CD4-positive, alpha-beta memory T cell (primary cell): ENCODE measurements at regions of chr4 and their contacts with region 1.

Region 1: GRCh38 chr4:122577808-122578781 is 42.8 kb downstream of the IL21 start:
- DNase-seq: peak; percentile 84 to 93 (median 87)
- H3K4me3 ChIP-seq: peak overlapping the region in 1 of 2 donors; percentile 12
- H3K4me3 Mint-ChIP-seq: peak overlapping the region; percentile 69 to 85 (median 78)
- H3K27ac ChIP-seq: peak overlapping the region; percentile 60
- H3K27ac Mint-ChIP-seq: peak overlapping the region; percentile 84 to 98 (median 96)
- H3K4me1 ChIP-seq: peaks cover 32% of the 10 kb centered on the region
- H3K4me1 Mint-ChIP-seq: peaks cover 29 to 49% (median 34%) of the 10 kb centered on the region in 4 donors
- H3K27me3 ChIP-seq: no peaks in the 10 kb centered on the region
- H3K27me3 Mint-ChIP-seq: no peaks in the 10 kb centered on the region

Region 2: GRCh38 chr4:121900132-121900983 is 677.7 kb before region 1 on chr4:
- CTCF ChIA-PET with region 1: interaction called, 24 read pairs
- POLR2A ChIA-PET with region 1: no interaction called
- intact Hi-C with region 1: loop called (anchors 1 kb)
- DNase-seq: peak; percentile 44 to 57 (median 49)
- H3K4me3 ChIP-seq: no peak overlapping the region
- H3K4me3 Mint-ChIP-seq: no peak overlapping the region
- H3K27ac ChIP-seq: no peak overlapping the region
- H3K27ac Mint-ChIP-seq: no peak overlapping the region
- H3K4me1 ChIP-seq: no peaks in the 10 kb centered on the region
- H3K4me1 Mint-ChIP-seq: peaks cover 0 to 8% (median 4%) of the 10 kb centered on the region in 4 donors
- H3K27me3 ChIP-seq: no peaks in the 10 kb centered on the region
- H3K27me3 Mint-ChIP-seq: peaks cover 2 to 7% of the 10 kb centered on the region in 2 donors

Region 3: DNA sequence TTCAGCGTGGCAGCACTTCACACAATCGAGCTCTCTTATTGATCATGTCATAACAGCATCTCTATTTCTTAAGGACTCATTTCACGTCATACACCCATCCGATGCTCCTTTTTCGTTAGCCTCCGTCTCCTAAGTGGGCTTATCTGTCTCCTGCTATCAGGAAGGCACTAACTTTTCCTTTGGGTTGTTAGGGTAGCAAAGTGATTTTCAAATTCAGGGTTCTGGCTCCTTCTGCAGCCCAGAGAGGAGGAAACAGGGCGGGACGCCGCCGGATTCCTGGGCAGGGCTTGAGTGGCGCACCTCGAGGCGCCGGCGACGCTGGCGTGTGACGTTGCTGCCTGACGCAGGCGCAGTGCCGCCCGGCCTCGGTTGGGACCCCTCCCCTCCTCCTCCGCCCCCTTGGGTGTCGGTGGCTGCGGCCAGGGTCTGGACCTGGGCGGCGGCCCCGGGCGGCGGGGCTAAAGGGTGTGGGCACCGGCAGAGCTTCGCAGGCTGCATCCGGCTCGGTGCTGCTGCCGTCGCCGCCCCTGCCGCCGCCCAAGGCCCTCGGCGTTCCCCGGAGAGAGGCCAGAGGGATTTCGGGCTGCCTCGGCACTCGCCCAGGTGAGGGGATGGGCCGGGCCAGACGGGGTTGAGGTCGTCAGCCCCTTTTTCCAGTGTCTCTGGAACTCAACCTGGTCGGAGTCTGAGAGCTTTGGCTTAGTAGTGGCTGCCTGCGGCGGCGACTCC is 425.9 kb before region 1 on chr4 and contains the start of gene BLTP1:
- CTCF ChIA-PET with region 1: interaction called, 3 read pairs
- POLR2A ChIA-PET with region 1: no interaction called
- intact Hi-C with region 1: loop called (anchors 5 kb)
- DNase-seq: peak; percentile 85 to 89 (median 88)
- H3K4me3 ChIP-seq: peak within 1 kb of the TSS; percentile 73 to 92
- H3K4me3 Mint-ChIP-seq: peak within 1 kb of the TSS; percentile 92 to 100 (median 96)
- H3K27ac ChIP-seq: peak within 1 kb of the TSS; percentile 85
- H3K27ac Mint-ChIP-seq: peak within 1 kb of the TSS; percentile 92 to 100 (median 99)
- H3K4me1 ChIP-seq: peaks cover 63% of the 10 kb centered on the region
- H3K4me1 Mint-ChIP-seq: peaks cover 51 to 84% (median 64%) of the 10 kb centered on the region in 4 donors
- H3K27me3 ChIP-seq: no peaks in the 10 kb centered on the region
- H3K27me3 Mint-ChIP-seq: no peaks in the 10 kb centered on the region
- total RNA-seq, gene BLTP1: 83.9 to 87.5 TPM

Region 4: DNA sequence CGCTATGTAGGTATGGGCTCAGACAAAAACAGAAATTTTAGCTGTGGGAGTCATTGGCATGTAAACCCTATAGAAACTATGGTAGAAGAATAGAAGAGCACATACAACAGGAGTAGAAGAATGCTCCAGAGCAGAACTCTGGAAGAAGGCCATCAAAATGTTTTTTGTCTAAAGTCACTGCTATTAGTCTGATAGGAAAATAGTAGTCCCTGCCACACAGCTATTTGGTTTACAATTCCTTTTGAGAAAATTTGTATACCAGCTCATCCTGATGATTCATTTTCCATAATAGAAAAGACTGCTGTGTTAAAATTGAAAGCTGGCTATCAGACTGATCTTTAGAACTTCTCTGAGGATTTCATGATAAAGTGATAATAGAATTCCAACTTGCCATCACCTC is 232.1 kb before region 1 on chr4:
- CTCF ChIA-PET with region 1: interaction called, 24 read pairs
- POLR2A ChIA-PET with region 1: no interaction called
- intact Hi-C with region 1: no loop called
- DNase-seq: no peak
- H3K4me3 ChIP-seq: no peak overlapping the region
- H3K4me3 Mint-ChIP-seq: no peak overlapping the region
- H3K27ac ChIP-seq: no peak overlapping the region
- H3K27ac Mint-ChIP-seq: no peak overlapping the region
- H3K4me1 ChIP-seq: no peaks in the 10 kb centered on the region
- H3K4me1 Mint-ChIP-seq: no peaks in the 10 kb centered on the region
- H3K27me3 ChIP-seq: no peaks in the 10 kb centered on the region
- H3K27me3 Mint-ChIP-seq: no peaks in the 10 kb centered on the region

Region 5: GRCh38 chr4:122458625-122459024 is 119.5 kb before region 1 on chr4:
- CTCF ChIA-PET with region 1: interaction called, 24 read pairs
- POLR2A ChIA-PET with region 1: interaction called, 39 read pairs
- intact Hi-C with region 1: loop called (anchors 1 kb)
- DNase-seq: peak; percentile 45 to 70 (median 53)
- H3K4me3 ChIP-seq: peak overlapping the region; percentile 26 to 75
- H3K4me3 Mint-ChIP-seq: peak overlapping the region; percentile 84 to 90 (median 88)
- H3K27ac ChIP-seq: peak overlapping the region; percentile 42
- H3K27ac Mint-ChIP-seq: peak overlapping the region; percentile 81 to 95 (median 93)
- H3K4me1 ChIP-seq: peaks cover 55% of the 10 kb centered on the region
- H3K4me1 Mint-ChIP-seq: peaks cover 40 to 52% (median 46%) of the 10 kb centered on the region in 4 donors
- H3K27me3 ChIP-seq: no peaks in the 10 kb centered on the region
- H3K27me3 Mint-ChIP-seq: no peaks in the 10 kb centered on the region

Region 6: DNA sequence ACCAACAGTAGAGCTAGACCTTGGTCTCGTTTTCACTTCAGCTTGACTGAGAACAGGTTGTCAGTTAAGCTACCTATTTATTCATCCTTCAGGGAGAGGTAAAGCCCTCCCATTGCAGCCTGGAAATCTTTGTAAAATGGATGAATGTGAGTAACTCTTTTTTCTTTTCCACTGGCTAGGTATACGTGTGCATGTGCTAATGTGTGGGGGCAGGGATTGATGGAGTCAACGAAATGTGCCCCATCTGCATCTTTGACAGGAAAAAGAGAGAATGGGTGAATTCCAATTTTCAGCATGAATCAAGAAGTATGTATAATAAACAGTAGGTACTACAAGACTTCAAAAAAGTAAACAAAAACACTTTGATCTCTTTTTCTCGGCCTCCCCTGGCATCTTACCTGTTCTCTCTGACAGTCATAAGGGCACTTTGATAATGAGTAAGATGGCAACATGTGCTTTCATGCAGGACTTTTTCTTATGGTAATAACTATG is 43.0 kb after region 1 on chr4 and contains the start of gene IL21:
- CTCF ChIA-PET with region 1: no interaction called
- POLR2A ChIA-PET with region 1: interaction called, 4 read pairs
- intact Hi-C with region 1: loop called (anchors 2 kb)
- DNase-seq: no peak
- H3K4me3 ChIP-seq: peak within 1 kb of the TSS in 1 of 2 donors; percentile 3
- H3K4me3 Mint-ChIP-seq: peak within 1 kb of the TSS; percentile 5 to 84 (median 67)
- H3K27ac ChIP-seq: no peak within 1 kb of the TSS
- H3K27ac Mint-ChIP-seq: peak within 1 kb of the TSS in 4 of 7 donors; percentile 2 to 54 (median 45)
- H3K4me1 ChIP-seq: peaks cover 44% of the 10 kb centered on the region
- H3K4me1 Mint-ChIP-seq: peaks cover 34 to 39% (median 36%) of the 10 kb centered on the region in 4 donors
- H3K27me3 ChIP-seq: no peaks in the 10 kb centered on the region
- H3K27me3 Mint-ChIP-seq: peaks cover 0 to 6% of the 10 kb centered on the region in 2 donors
- total RNA-seq, gene IL21: 0.28 TPM in 1 of 2 experiments, not detected in the other